Activated naive CD4-positive, alpha-beta T cell treated with anti-CD3 and anti-CD28 coated beads for 36 hours (primary cell): ENCODE measurements at regions of chr3 and their contacts with region 1.

Region 1: GRCh38 chr3:67113802-67114407 is 115.8 kb downstream of the KBTBD8 start:
- DNase-seq: peak; percentile 94
- H3K4me3 Mint-ChIP-seq: no peak overlapping the region
- H3K27ac Mint-ChIP-seq: no peak overlapping the region
- H3K4me1 Mint-ChIP-seq: peaks cover 4% of the 10 kb centered on the region
- H3K27me3 Mint-ChIP-seq: peaks cover 24% of the 10 kb centered on the region

Region 2: DNA sequence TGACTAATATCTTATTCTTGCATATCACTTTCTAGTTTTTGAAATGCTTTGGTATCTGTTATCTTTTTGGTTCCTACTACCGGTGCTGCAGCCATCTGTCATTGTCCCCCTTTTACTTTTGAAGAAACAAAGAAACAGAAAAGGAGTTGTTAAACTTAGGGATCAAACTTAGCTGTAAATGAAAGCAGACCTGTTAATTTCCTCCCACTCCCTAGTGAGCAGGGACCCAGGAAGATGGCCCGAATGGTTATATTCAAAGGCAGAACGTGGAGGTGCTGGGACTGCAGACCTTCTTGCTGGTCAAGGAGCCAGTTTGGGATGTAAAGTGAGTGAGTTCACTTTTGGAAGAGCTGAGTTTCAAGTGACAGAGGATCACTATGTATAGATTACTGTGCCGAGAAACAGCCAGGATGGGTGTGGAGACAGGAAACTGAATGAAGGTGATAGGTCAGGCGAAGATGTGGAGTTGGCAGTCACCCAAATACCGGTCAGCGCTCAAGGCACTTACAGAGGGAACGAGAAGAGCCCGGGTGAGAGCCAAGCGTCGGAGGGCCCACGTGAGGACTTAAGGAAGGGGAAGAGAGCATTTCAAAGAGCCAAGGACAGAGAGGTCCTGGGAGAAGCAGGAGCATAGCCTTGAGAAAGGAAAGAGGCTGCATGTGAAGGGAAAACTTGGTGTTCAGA is 95.7 kb before region 1 on chr3:
- CTCF ChIA-PET with region 1: no interaction called
- intact Hi-C with region 1: no loop called
- DNase-seq: peak; percentile 39
- H3K4me3 Mint-ChIP-seq: peak overlapping the region; percentile 30
- H3K27ac Mint-ChIP-seq: peak overlapping the region; percentile 10
- H3K4me1 Mint-ChIP-seq: peaks cover 30% of the 10 kb centered on the region
- H3K27me3 Mint-ChIP-seq: no peaks in the 10 kb centered on the region

Region 3: DNA sequence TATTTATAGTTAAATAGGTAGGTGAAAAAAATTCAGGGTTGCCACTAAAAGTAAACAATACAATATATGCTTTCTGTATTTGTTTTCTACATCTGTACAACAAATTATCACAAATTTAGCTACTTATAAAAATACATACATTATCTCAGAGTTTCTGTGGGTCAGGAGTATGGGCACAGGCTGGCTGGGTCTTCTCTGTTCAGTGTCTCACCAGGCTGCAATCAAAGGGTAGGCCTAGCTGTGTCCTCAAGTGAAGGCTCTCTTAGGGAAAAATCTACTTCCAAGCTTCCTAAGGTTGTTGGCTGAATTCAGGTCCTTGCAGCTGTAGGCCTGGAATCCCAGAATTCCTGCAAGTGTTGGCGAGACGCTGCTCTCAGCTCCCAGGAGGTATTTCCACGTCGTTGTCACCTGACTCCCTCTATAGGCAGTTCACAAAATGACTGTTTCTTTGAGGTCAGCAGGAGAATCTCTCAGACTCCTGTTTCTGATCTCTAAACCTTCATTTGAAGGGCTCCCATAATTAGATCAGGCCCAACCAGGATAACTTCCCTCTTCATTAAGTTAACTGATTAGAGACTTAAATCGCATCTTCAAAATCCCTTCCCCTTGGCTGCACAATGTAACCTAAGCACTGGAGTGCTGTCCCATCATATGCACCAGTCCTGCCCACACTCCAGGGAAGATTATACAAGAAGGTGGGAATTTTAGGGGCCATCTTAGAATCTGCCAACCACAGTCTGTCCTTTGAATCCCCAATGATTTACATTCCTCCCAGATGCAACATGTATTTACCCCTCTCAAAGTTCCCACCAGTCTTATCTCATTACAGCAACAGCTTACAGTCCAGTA is 243.9 kb after region 1 on chr3:
- CTCF ChIA-PET with region 1: interaction called, 20 read pairs
- intact Hi-C with region 1: loop called (anchors 1 kb)
- DNase-seq: no peak
- H3K4me3 Mint-ChIP-seq: no peak overlapping the region
- H3K27ac Mint-ChIP-seq: no peak overlapping the region
- H3K4me1 Mint-ChIP-seq: peaks cover 24% of the 10 kb centered on the region
- H3K27me3 Mint-ChIP-seq: no peaks in the 10 kb centered on the region

Region 4: GRCh38 chr3:67605377-67605776 is 491.5 kb after region 1 on chr3:
- CTCF ChIA-PET with region 1: no interaction called
- intact Hi-C with region 1: loop called (anchors 1 kb)
- DNase-seq: peak; percentile 31
- H3K4me3 Mint-ChIP-seq: no peak overlapping the region
- H3K27ac Mint-ChIP-seq: peak overlapping the region; percentile 37
- H3K4me1 Mint-ChIP-seq: peaks cover 64% of the 10 kb centered on the region
- H3K27me3 Mint-ChIP-seq: no peaks in the 10 kb centered on the region

Region 5: DNA sequence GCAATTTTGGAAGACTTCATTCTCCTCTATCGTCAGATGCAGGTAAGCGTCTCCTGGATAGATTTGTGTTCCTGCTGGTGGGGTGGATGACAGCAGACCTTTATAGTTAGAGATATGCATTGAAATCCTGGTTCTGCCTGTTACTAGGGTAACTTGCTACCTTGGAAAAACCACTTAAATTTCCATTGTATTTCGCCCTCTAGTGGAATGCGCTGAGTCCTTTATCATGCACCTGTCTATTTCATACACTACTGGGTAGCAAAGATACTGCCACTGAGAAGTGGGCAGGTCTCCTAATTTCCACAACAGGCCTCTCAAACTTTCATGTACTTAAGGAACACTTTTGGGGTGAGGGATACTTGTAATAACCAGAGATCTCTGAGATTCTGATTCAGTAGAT is 750.0 kb after region 1 on chr3:
- CTCF ChIA-PET with region 1: no interaction called
- intact Hi-C with region 1: loop called (anchors 1 kb)
- DNase-seq: no peak
- H3K4me3 Mint-ChIP-seq: no peak overlapping the region
- H3K27ac Mint-ChIP-seq: no peak overlapping the region
- H3K4me1 Mint-ChIP-seq: no peaks in the 10 kb centered on the region
- H3K27me3 Mint-ChIP-seq: no peaks in the 10 kb centered on the region

Region 6: DNA sequence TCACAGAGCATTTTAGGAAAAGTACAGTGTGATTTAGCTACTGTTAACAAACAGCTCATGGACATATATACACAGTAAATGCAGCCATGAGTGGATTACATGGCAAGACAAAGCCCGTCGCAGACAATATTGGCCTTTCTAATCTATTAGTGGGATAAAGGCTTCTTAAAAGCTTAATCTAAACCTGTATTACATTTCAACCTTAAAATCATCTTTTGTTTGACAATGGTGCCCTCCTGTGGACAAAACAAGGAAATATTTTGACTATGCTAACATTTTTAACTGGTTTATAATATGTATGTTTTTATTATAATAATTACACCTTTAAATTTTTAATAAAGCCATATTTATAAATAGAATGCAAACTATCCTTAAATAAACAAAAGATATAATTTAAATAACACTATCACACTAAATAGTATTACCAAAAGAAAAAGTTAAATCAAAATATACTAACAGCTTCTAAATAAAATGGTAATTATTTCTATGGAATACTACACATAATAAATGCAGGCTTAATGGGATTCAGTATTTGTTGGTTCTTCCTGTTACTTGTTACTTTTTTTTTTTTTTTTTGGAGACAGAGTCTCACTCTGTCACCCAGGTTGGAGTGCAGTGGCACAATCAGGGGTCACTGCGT is 1779.8 kb after region 1 on chr3:
- CTCF ChIA-PET with region 1: interaction called, 9 read pairs
- intact Hi-C with region 1: loop called (anchors 5 kb)
- DNase-seq: no peak
- H3K4me3 Mint-ChIP-seq: no peak overlapping the region
- H3K27ac Mint-ChIP-seq: no peak overlapping the region
- H3K4me1 Mint-ChIP-seq: no peaks in the 10 kb centered on the region
- H3K27me3 Mint-ChIP-seq: peaks cover 6% of the 10 kb centered on the region